Posterior vena cava (tissue), 2 donors: ENCODE measurements at regions of chr7 and their contacts with region 1.

Region 1: GRCh38 chr7:37201003-37201875 is 247.4 kb downstream of the ELMO1 start:
- DNase-seq: peak; percentile 91

Region 2: GRCh38 chr7:36473454-36474282 is 727.6 kb before region 1 on chr7:
- intact Hi-C with region 1: loop called in 1 of 2 experiments (anchors 10 kb)
- DNase-seq: no peak

Region 3: GRCh38 chr7:37495574-37496184 is 294.4 kb after region 1 on chr7:
- intact Hi-C with region 1: loop called in 1 of 2 experiments (anchors 10 kb)
- DNase-seq: no peak

Region 4: GRCh38 chr7:37735196-37735595 is 534.0 kb after region 1 on chr7:
- intact Hi-C with region 1: loop called in 1 of 2 experiments (anchors 2 kb)
- DNase-seq: no peak

Region 5: DNA sequence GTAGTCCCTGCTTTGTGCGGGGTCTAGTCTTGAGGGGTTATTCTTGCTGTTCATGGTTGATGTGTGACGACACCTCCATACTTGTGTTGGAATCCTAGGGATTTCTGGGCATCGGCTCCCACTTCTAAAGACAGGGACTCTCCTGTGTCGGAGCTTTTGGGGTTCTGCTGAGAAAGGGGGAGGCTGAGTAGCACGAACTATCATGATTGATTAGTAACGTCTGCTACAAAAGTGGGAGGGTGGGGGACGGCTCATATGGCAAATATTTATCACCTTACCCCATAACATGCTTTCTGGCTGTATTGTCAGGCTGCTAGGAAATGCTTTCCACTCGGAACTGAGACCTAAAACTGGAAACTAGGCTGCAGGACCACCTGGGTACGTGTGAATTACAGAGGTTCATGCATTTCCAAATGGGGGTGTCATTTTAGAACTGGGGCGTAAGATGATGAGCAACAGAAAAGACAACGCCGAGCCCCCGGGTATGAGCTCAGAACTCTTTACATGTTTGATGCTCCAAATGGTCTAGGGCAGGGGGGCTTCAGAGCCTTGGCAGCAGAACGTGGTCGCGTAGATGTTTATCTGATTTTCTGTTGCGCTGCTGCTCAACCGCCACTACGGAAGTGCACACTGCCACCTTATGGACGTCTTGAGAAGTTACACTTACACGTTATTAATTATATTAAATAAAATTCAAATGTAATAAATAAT is 632.0 kb after region 1 on chr7:
- intact Hi-C with region 1: loop called in 1 of 2 experiments (anchors 10 kb)
- DNase-seq: peak; percentile 81